ENCODE measurements at regions of chr11 and their contacts with region 1.

Region 1: GRCh38 chr11:65471410-65471762 is 27.5 kb upstream of the MALAT1 start:
- DNase-seq: peak; percentile 47
- ATAC-seq: no peak
- H3K4me3 Mint-ChIP-seq: peak overlapping the region; percentile 62
- H3K27ac Mint-ChIP-seq: peak overlapping the region; percentile 92
- H3K4me1 Mint-ChIP-seq: peaks cover 46% of the 10 kb centered on the region
- H3K27me3 Mint-ChIP-seq: no peaks in the 10 kb centered on the region

Region 2: DNA sequence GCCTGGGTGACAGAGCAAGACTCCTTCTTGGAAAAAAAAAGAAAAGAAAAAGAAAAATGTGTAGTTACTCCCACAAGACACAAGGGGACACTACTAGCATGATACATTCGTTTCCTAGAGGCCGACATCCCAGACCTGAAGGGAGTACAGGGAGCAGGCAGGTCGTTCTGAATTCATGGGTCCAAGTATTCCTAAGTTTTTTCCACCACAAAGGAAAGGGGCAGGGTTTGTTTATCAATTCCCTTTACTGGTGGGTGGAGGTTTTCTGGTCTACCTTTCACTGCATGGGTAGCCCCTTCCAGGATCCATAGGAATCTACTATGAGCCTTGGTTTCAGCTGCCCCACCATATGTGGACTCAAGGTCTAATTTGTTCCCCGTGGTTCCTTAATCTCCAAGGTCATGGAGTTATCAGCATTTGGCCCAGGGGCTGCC is 105.0 kb before region 1 on chr11:
- CTCF ChIA-PET with region 1: no interaction called
- POLR2A ChIA-PET with region 1: interaction called, 5 read pairs
- intact Hi-C with region 1: loop called in 1 of 2 experiments (anchors 1 kb)
- DNase-seq: peak; percentile 48
- ATAC-seq: peak; percentile 72
- H3K4me3 Mint-ChIP-seq: no peak overlapping the region
- H3K27ac Mint-ChIP-seq: no peak overlapping the region
- H3K4me1 Mint-ChIP-seq: peaks cover 10% of the 10 kb centered on the region
- H3K27me3 Mint-ChIP-seq: no peaks in the 10 kb centered on the region

Region 3: DNA sequence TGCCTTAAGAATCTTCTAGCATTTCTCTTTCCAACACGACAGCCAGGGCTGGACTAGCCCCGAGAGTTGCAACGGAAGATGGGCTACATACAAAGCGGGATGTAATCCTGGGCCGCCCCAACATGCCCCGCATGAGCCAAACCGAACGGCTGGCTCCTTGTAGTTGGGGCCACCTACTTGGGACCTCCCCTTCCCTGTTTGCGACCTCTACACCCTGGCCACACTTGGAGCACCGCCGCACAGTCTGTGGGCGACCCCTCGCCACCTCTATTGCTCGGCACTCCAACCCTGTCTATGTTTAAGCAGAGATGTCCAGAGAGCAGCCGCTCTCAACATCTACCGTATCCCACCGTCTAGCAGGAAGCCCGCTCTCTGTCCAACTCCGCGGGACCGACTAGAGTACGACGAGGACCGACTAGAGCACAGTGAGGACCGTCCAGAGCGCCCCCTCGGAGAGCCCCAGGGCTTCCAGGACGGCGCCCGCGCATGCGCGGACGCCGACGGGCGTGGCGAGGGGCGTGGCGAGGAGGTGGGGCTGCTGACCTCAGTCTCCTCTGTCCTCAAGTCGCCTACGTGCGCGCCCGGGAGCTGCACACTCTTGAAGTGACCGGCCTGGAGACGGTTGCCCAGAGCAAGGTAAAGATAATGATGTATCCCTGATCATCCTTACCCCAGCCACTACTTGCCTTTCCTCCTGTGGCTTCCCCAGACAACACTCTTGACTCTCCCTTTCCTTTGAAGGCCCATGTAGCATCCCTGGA is 16.5 kb before region 1 on chr11:
- CTCF ChIA-PET with region 1: interaction called, 3 read pairs
- POLR2A ChIA-PET with region 1: interaction called, 4 read pairs
- intact Hi-C with region 1: loop called in 1 of 2 experiments (anchors 2 kb)
- DNase-seq: peak; percentile 91
- ATAC-seq: peak; percentile 94
- H3K4me3 Mint-ChIP-seq: peak overlapping the region; percentile 92
- H3K27ac Mint-ChIP-seq: peak overlapping the region; percentile 85
- H3K4me1 Mint-ChIP-seq: peaks cover 40% of the 10 kb centered on the region
- H3K27me3 Mint-ChIP-seq: no peaks in the 10 kb centered on the region

Region 4: GRCh38 chr11:65487413-65488272 is 16.3 kb after region 1 on chr11:
- CTCF ChIA-PET with region 1: interaction called, 72 read pairs
- POLR2A ChIA-PET with region 1: interaction called, 58 read pairs
- intact Hi-C with region 1: no loop called
- DNase-seq: peak; percentile 88
- ATAC-seq: peak; percentile 76
- H3K4me3 Mint-ChIP-seq: peak overlapping the region; percentile 42
- H3K27ac Mint-ChIP-seq: peak overlapping the region; percentile 88
- H3K4me1 Mint-ChIP-seq: peaks cover 59% of the 10 kb centered on the region
- H3K27me3 Mint-ChIP-seq: no peaks in the 10 kb centered on the region

Region 5: DNA sequence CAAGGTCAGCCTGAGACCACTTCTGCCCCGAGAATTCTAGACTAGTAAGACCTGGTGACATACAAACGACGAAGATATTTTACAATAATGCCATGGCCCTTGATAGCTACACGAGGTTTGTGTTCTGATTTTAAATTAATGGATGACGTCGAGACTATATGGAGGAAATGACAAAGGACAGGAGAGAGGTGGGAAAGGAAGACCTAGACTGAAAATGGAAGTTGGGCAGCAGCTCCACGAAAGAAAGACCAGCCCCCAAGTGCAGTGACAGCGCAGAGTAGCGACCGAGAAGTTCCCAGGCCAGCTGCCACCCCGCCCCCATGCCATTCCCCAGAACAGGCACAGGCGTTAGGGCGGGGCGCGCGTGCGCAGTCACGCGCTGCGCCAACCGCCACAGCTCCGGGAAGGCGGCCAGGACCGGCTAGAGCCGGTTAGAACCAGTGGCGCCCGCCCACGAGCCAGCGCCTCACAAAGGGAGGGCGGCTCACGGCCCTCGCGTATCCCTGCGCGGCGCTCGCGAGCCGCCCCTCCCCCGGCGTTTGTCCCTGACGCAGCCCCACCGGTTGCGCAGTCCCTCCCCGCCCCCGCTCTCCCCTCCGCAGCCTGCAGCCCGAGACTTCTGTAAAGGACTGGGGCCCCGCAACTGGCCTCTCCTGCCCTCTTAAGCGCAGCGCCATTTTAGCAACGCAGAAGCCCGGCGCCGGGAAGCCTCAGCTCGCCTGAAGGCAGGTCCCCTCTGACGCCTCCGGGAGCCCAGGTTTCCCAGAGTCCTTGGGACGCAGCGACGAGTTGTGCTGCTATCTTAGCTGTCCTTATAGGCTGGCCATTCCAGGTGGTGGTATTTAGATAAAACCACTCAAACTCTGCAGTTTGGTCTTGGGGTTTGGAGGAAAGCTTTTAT is 26.0 kb after region 1 on chr11:
- CTCF ChIA-PET with region 1: interaction called, 72 read pairs
- POLR2A ChIA-PET with region 1: interaction called, 180 read pairs
- intact Hi-C with region 1: loop called (anchors 1 kb)
- DNase-seq: peak; percentile 100
- ATAC-seq: peak; percentile 70
- H3K4me3 Mint-ChIP-seq: no peak overlapping the region
- H3K27ac Mint-ChIP-seq: peak overlapping the region; percentile 96
- H3K4me1 Mint-ChIP-seq: peaks cover 41% of the 10 kb centered on the region
- H3K27me3 Mint-ChIP-seq: no peaks in the 10 kb centered on the region

Region 6: DNA sequence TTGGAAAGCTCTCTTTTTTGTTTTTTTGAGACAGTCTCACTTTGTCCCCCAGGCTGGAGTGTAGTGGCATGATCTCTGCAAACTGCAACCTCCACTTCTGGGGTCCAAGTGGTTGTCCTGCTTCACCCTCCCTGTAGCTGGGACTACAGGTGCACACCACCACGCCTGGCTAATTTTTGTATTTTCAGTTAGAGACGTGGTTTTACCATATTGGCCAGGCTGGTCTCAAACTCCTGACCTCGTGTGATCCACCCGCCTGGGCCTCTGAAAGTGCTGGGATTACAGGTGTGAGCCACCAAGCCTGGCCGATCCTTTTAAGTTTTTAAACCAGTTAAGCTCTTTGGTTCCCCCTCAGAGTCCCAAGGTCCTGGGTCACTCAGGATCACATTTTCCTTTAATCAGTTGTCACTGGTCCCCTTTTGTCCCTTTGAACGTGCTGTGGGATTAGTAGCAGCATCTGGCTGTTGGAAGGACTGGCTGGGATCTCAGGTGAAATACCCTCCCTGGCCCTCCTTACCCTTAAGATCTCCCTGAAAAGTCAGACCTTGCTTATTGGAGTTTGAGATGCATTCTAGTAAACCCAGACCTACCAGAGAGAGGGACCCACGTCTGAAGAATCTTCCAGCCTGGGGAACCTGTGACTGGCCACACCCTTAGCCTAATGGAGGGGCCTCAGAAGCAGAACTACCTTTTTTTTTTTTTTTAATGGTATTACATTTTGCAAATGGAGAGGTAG is 35.6 kb after region 1 on chr11:
- CTCF ChIA-PET with region 1: interaction called, 13 read pairs
- POLR2A ChIA-PET with region 1: interaction called, 153 read pairs
- intact Hi-C with region 1: loop called in 1 of 2 experiments (anchors 1 kb)
- DNase-seq: peak; percentile 75
- ATAC-seq: peak; percentile 51
- H3K4me3 Mint-ChIP-seq: no peak overlapping the region
- H3K27ac Mint-ChIP-seq: no peak overlapping the region
- H3K4me1 Mint-ChIP-seq: peaks cover 60% of the 10 kb centered on the region
- H3K27me3 Mint-ChIP-seq: no peaks in the 10 kb centered on the region